ENCODE measurements at regions of chr9 and their contacts with region 1.

Region 1: GRCh38 chr9:124054582-124055227 is 43.1 kb downstream of the LHX2 start:
- DNase-seq: peak; percentile 83
- H3K4me3 ChIP-seq: no peak overlapping the region
- H3K27ac ChIP-seq: no peak overlapping the region
- H3K4me1 ChIP-seq: no peaks in the 10 kb centered on the region
- H3K27me3 ChIP-seq: peaks cover 3% of the 10 kb centered on the region
- CTCF ChIP-seq: no peak

Region 2: DNA sequence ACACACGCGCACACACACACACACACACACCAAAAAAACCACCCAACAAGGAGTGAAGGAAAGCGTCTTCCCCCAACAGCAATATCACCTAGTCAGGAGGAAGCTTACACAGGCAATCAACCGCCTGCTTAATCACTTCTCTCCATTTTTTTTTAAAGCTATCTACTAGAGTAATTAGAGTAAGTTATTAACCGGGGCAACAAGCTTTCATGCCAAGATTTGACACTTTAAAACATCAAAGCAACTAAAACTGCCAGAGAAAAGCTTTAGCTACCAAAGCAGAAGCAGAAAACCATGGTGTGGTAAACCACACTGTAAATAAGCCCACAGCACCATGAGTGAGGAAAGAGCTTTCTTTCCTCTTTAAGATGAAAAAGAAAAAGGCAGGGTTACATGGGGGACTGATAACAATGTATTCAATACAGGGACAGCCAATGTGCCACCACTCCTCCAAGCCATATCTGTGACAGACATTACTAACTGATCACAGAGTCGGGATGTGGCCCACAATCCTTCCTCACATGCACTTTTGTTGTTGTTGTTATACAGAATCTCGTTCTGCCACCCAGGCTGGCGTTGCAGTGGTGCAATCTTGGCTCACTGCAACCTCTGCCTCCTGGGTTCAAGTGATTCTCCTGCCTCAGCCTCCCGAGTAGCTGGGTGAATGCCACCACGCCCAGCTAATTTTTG is 416.6 kb before region 1 on chr9:
- CTCF ChIA-PET with region 1: no interaction called
- dilution Hi-C with region 1: loop called (anchors 25 kb)
- in situ Hi-C with region 1: no loop called
- intact Hi-C with region 1: no loop called
- DNase-seq: no peak
- H3K4me3 ChIP-seq: no peak overlapping the region
- H3K27ac ChIP-seq: no peak overlapping the region
- H3K4me1 ChIP-seq: no peaks in the 10 kb centered on the region
- H3K27me3 ChIP-seq: no peaks in the 10 kb centered on the region
- CTCF ChIP-seq: no peak

Region 3: DNA sequence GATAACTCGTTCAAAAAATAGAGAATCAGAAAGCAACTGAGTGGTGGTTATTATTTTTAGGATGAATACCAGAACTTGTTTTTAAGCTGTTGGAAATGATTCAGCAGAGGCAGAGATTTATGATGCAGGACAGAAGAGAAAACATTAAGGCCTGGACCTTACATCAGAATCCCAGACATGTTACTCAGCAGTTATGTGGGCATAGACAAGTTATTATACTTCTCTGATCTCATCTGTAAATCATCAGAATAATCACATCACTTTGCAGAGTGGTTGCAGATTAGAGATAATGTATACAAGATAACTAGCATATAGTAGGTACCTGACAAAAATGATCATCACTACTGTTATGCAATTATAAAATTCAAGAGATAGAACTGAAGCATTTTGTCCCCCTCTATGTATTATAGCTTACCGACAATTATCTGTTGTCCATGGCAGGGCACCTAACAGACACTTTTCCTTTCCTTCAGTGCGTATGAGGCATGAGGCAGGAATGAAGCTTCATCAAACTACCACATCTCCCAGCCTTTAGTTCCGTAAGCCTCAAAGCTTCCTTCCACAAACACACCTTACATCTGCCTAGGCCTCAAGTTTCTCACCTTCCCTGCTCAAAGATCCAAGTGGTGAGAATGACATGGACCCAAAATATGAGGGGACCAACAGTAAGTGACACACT is 290.7 kb before region 1 on chr9:
- CTCF ChIA-PET with region 1: no interaction called
- dilution Hi-C with region 1: no loop called
- in situ Hi-C with region 1: no loop called
- intact Hi-C with region 1: no loop called
- DNase-seq: peak; percentile 44
- H3K4me3 ChIP-seq: no peak overlapping the region
- H3K27ac ChIP-seq: no peak overlapping the region
- H3K4me1 ChIP-seq: no peaks in the 10 kb centered on the region
- H3K27me3 ChIP-seq: no peaks in the 10 kb centered on the region
- CTCF ChIP-seq: no peak

Measured in mammary epithelial cell (primary cell).